Heart left ventricle (tissue), 16 donors: ENCODE measurements at regions of chr3 and their contacts with region 1.

Region 1: GRCh38 chr3:161579395-161580126 is 83.0 kb downstream of the OTOL1 start:
- DNase-seq: no peak
- ATAC-seq: no peak
- H3K4me3 ChIP-seq: no peak overlapping the region
- H3K27ac ChIP-seq: no peak overlapping the region
- H3K4me1 ChIP-seq: no peaks in the 10 kb centered on the region
- H3K27me3 ChIP-seq: no peaks in the 10 kb centered on the region
- CTCF ChIP-seq: no peak
- POLR2A ChIP-seq: no peak

Region 2: DNA sequence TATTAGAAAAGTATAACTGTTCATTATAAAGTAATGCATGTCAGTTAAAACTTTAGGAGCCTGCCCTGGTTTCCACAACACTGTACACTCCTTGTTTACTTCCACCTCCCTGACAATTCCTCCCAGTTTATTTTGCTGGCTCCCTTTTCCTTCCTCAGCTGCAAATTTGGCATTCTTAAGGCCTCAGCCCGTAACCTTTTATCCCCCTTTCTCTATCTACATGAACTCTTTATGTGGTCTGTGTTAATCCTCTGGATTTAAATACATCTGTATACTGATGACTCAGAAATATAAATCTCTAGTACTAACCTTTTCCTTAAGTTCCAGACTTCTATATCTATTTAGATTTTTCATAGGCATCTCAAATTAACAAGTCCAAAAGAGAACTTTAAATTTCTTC is 60.6 kb after region 1 on chr3:
- intact Hi-C with region 1: loop called in 1 of 10 experiments (anchors 2 kb)
- DNase-seq: no peak
- ATAC-seq: no peak
- H3K4me3 ChIP-seq: no peak overlapping the region
- H3K27ac ChIP-seq: no peak overlapping the region
- H3K4me1 ChIP-seq: no peaks in the 10 kb centered on the region
- H3K27me3 ChIP-seq: no peaks in the 10 kb centered on the region
- CTCF ChIP-seq: no peak
- POLR2A ChIP-seq: no peak